MCF 10A (cell line): ENCODE measurements at regions of chr7 and their contacts with region 1.

Region 1: GRCh38 chr7:143008007-143008901 is 18.7 kb downstream of the OR9A2 start:
- DNase-seq: peak; percentile 74
- H3K4me3 Mint-ChIP-seq: no peak overlapping the region
- H3K27ac Mint-ChIP-seq: no peak overlapping the region
- H3K4me1 Mint-ChIP-seq: no peaks in the 10 kb centered on the region
- H3K27me3 Mint-ChIP-seq: peaks cover 54% of the 10 kb centered on the region
- CTCF ChIP-seq: peak; percentile 95

Region 2: DNA sequence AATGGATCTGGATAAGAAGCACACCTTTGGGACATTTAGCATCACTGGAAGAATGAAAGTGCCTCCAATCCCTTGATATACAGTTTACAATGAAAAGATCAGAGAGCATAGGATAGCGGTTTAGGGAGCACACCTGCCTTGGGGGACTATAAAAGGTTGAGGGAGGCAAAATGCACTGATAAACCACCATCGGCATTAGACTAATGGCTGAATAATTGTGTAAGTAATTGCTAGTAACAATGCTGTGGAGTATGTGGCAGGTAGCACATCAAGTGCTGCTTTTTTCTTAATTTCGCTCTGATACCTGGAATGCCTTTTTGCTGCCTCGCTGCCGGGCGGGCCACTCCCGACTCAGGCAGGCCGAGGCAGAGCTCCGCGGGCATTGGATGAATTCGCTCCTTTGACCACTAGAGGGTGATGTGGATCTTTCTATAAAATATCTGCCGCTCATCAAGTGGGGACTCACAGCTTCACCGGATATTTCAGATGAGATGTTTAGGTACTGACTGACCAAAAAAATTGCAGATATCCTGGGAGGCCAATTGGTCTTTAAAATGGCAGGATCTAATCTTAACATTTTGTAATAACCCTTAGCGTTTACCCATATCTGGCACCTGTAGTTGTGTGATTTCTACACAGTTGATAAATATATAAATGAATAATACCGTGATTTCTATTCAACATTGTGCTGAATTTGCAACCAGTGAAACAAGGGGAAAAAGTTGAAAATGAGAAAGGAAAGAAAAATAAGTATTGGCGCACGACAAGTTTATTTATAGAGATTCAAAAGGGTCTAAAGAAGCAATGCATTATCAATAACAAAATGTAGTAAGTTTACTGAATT is 375.7 kb before region 1 on chr7:
- CTCF ChIA-PET with region 1: interaction called, 29 read pairs
- POLR2A ChIA-PET with region 1: no interaction called
- intact Hi-C with region 1: loop called (anchors 2 kb)
- DNase-seq: peak; percentile 75
- H3K4me3 Mint-ChIP-seq: no peak overlapping the region
- H3K27ac Mint-ChIP-seq: no peak overlapping the region
- H3K4me1 Mint-ChIP-seq: peaks cover 11% of the 10 kb centered on the region
- H3K27me3 Mint-ChIP-seq: peaks cover 14% of the 10 kb centered on the region
- CTCF ChIP-seq: peak; percentile 61

Region 3: GRCh38 chr7:142697270-142697669 is 311.0 kb before region 1 on chr7:
- CTCF ChIA-PET with region 1: no interaction called
- POLR2A ChIA-PET with region 1: no interaction called
- intact Hi-C with region 1: no loop called
- DNase-seq: no peak
- H3K4me3 Mint-ChIP-seq: no peak overlapping the region
- H3K27ac Mint-ChIP-seq: no peak overlapping the region
- H3K4me1 Mint-ChIP-seq: no peaks in the 10 kb centered on the region
- H3K27me3 Mint-ChIP-seq: peaks cover 63% of the 10 kb centered on the region
- CTCF ChIP-seq: no peak

Region 4: GRCh38 chr7:142859829-142860228 is 148.4 kb before region 1 on chr7:
- CTCF ChIA-PET with region 1: interaction called, 66 read pairs
- POLR2A ChIA-PET with region 1: no interaction called
- intact Hi-C with region 1: no loop called
- DNase-seq: peak; percentile 77
- H3K4me3 Mint-ChIP-seq: no peak overlapping the region
- H3K27ac Mint-ChIP-seq: no peak overlapping the region
- H3K4me1 Mint-ChIP-seq: peaks cover 26% of the 10 kb centered on the region
- H3K27me3 Mint-ChIP-seq: peaks cover 44% of the 10 kb centered on the region
- CTCF ChIP-seq: no peak

Region 5: GRCh38 chr7:142880876-142881505 is 127.3 kb before region 1 on chr7:
- CTCF ChIA-PET with region 1: interaction called, 127 read pairs
- POLR2A ChIA-PET with region 1: interaction called, 3 read pairs
- intact Hi-C with region 1: loop called (anchors 10 kb)
- DNase-seq: peak; percentile 61
- H3K4me3 Mint-ChIP-seq: no peak overlapping the region
- H3K27ac Mint-ChIP-seq: no peak overlapping the region
- H3K4me1 Mint-ChIP-seq: no peaks in the 10 kb centered on the region
- H3K27me3 Mint-ChIP-seq: peaks cover 68% of the 10 kb centered on the region
- CTCF ChIP-seq: peak; percentile 84

Region 6: DNA sequence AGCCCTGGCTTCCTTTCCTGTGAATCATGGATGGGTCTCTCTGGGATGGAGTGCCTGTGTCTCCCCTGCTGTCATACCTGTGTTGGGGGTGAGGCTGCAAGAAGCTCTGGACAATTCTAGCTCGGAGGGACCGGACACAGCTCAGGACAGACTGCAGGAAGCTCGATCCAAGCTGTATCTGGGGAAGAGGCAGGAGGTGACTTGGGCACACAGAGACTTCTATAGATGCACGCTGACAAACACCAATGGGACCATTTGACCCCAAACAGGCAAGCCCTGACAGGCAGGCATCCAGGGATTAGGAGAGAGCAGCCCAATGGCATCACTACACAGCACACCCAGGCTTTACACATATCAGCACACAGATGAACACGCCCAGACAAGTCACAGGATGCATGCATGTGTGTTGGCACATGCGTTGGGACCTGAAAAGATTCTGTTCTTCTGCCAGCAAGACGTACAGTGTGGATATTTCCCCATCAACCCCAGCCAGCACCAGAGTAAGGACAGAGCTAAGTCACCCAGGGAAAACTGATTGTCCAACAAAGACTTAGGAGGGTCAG is 64.5 kb before region 1 on chr7:
- CTCF ChIA-PET with region 1: interaction called, 13 read pairs
- POLR2A ChIA-PET with region 1: no interaction called
- intact Hi-C with region 1: no loop called
- DNase-seq: peak; percentile 50
- H3K4me3 Mint-ChIP-seq: no peak overlapping the region
- H3K27ac Mint-ChIP-seq: no peak overlapping the region
- H3K4me1 Mint-ChIP-seq: peaks cover 6% of the 10 kb centered on the region
- H3K27me3 Mint-ChIP-seq: peaks cover 17% of the 10 kb centered on the region
- CTCF ChIP-seq: no peak

Region 7: DNA sequence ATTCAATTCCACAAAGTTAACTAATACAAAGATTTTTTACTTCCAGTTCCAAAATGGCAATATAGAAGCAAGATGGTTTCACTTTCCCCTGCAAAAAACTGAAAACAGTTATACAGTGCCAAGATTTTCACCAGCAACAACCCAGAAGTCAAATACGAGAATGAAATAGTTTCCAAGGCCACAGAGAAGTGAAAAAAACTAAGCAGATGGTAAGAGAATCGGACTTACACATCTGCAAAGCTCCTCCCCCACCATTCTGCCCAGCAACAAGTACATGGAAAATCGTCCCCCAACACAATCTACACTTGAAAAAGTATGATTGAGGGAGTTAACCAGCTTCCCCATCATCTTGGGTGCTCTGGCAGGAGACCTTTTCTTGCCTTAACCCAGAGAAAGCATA is 15.8 kb before region 1 on chr7:
- CTCF ChIA-PET with region 1: interaction called, 48 read pairs
- POLR2A ChIA-PET with region 1: interaction called, 4 read pairs
- intact Hi-C with region 1: no loop called
- DNase-seq: no peak
- H3K4me3 Mint-ChIP-seq: no peak overlapping the region
- H3K27ac Mint-ChIP-seq: no peak overlapping the region
- H3K4me1 Mint-ChIP-seq: no peaks in the 10 kb centered on the region
- H3K27me3 Mint-ChIP-seq: peaks cover 39% of the 10 kb centered on the region
- CTCF ChIP-seq: no peak

Region 8: DNA sequence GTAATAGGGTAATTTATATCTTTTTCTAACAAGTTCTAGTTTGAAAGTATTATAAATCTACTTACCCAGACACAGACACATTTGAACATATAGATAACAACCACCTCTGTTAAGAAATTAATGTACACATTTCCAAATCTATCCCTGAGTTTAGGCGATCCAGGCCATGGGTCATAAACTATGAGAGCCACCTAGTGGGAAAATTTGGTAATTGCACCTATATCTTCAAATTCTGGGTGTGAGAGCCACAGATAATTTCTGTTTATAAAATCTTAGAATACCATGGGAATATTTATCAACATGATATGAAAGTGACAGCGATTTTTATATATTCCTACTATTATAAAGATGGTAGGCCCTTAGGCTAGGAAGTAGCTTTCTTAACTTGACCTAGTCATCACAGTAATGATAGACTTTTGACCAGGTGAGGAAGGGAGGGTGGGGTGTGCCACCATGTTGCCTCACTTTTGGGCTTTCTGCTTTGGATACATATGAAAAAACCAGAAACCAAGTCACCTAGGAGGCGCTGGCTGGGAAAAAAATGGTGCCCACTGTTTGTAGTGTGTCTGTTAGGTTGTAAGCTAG is 408.4 kb after region 1 on chr7:
- CTCF ChIA-PET with region 1: no interaction called
- POLR2A ChIA-PET with region 1: no interaction called
- intact Hi-C with region 1: loop called (anchors 10 kb)
- DNase-seq: peak; percentile 75
- H3K4me3 Mint-ChIP-seq: no peak overlapping the region
- H3K27ac Mint-ChIP-seq: no peak overlapping the region
- H3K4me1 Mint-ChIP-seq: peaks cover 32% of the 10 kb centered on the region
- H3K27me3 Mint-ChIP-seq: no peaks in the 10 kb centered on the region
- CTCF ChIP-seq: peak; percentile 73